ENCODE measurements at regions of chr4 and their contacts with region 1.

Region 1: GRCh38 chr4:80365928-80366327 is 30.4 kb downstream of the CFAP299 start:
- DNase-seq: peak; percentile 76
- H3K4me3 ChIP-seq: no peak overlapping the region
- H3K27ac ChIP-seq: peak overlapping the region in 1 of 4 donors; percentile 3
- H3K4me1 ChIP-seq: peaks cover 0 to 5% (median 3%) of the 10 kb centered on the region in 4 donors
- H3K27me3 ChIP-seq: no peaks in the 10 kb centered on the region
- CTCF ChIP-seq: peak; percentile 31 to 67 (median 64)
- EP300 ChIP-seq: no peak
- POLR2A ChIP-seq: no peak

Region 2: GRCh38 chr4:80454040-80454439 is 88.1 kb after region 1 on chr4:
- intact Hi-C with region 1: no loop called
- DNase-seq: no peak
- H3K4me3 ChIP-seq: no peak overlapping the region
- H3K27ac ChIP-seq: no peak overlapping the region
- H3K4me1 ChIP-seq: no peaks in the 10 kb centered on the region
- H3K27me3 ChIP-seq: no peaks in the 10 kb centered on the region
- CTCF ChIP-seq: no peak
- EP300 ChIP-seq: no peak
- POLR2A ChIP-seq: no peak

Region 3: GRCh38 chr4:80610845-80611677 is 245.1 kb after region 1 on chr4:
- intact Hi-C with region 1: loop called (anchors 10 kb)
- DNase-seq: no peak
- H3K4me3 ChIP-seq: no peak overlapping the region
- H3K27ac ChIP-seq: no peak overlapping the region
- H3K4me1 ChIP-seq: peaks cover 0 to 28% (median 8%) of the 10 kb centered on the region in 4 donors
- H3K27me3 ChIP-seq: no peaks in the 10 kb centered on the region
- CTCF ChIP-seq: no peak
- EP300 ChIP-seq: no peak
- POLR2A ChIP-seq: no peak

Region 4: GRCh38 chr4:80713409-80713808 is 347.5 kb after region 1 on chr4:
- intact Hi-C with region 1: loop called (anchors 10 kb)
- DNase-seq: peak; percentile 76
- H3K4me3 ChIP-seq: no peak overlapping the region
- H3K27ac ChIP-seq: peak overlapping the region in 3 of 4 donors; percentile 57 to 74 (median 70)
- H3K4me1 ChIP-seq: peaks cover 0 to 62% (median 48%) of the 10 kb centered on the region in 4 donors
- H3K27me3 ChIP-seq: no peaks in the 10 kb centered on the region
- CTCF ChIP-seq: no peak
- EP300 ChIP-seq: no peak
- POLR2A ChIP-seq: no peak

Region 5: DNA sequence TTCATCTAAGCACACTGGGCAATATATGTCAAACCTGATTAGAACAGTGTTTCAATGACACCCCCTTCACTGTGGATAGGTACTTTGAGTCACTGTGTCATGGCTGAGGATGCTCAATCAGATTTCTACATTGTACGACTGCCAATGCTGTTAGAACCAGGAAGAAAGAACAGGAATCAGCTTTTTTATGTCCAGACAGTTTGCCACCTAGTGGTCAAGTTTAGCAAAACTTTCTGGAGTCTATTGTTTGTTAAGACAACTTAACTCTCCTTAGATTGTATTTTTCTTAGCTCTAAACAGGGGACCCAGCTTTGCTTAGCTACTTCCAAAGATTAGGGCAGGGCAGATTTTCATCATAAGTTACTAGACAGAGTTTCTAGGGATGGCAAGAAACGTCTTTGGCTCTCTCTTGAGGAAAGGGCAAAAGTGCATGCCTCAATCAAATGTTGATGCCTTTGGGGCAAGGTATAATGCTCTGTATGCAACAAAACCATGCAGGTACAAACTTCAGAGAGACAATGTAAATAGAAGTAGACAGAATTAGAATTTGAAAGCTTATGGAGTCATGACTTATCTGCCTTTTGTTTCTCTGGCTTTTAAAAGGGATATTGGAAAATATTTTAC is 624.1 kb after region 1 on chr4:
- intact Hi-C with region 1: loop called (anchors 2 kb)
- DNase-seq: no peak
- H3K4me3 ChIP-seq: no peak overlapping the region
- H3K27ac ChIP-seq: no peak overlapping the region
- H3K4me1 ChIP-seq: peaks cover 0 to 11% (median 0%) of the 10 kb centered on the region in 4 donors
- H3K27me3 ChIP-seq: no peaks in the 10 kb centered on the region
- CTCF ChIP-seq: peak; percentile 35 to 67 (median 52)
- EP300 ChIP-seq: no peak
- POLR2A ChIP-seq: no peak

Region 6: DNA sequence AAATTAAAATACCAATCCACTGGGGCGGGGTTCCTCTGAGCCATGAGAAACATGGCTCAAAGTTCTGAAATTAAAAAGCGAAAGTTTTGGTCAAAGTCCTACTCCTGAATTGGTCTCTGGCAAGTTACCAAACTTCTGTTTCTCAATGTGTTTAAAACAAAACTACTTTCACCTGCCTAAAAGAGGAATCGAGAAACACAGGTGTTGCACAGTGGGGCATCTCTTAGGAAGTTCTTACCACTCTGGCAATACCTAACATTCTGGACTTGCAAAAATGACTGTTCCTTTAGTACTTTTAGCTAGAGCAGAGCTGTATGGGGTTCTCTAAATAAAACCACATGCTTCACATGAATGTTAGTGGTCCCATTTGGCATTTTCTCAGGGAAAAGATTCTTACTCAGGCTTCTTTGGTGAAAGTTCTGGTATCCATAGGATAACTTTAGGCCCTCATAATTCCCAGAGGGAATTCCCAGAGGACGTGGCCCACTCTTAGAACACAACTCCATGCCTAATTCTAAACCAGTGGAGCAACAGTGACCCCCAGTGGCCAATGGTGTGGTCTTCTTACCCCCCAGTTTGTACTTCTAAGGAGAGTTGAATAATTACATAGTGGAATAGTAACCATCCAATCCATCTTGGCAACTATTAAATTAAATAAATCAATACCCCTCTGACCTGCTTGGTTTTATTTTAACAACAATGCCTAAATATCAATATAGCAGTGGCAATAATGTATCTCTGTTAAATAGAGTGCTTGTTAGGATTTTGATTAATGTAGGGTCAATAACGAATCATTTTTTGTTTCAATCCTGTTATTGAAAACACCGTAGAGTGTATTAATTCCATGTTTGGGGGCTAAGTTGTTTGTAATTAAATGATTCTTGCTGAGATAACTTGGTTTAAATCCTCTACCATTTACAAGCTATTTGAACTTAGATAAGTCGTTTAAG is 686.5 kb after region 1 on chr4:
- intact Hi-C with region 1: loop called (anchors 1 kb)
- DNase-seq: peak; percentile 80
- H3K4me3 ChIP-seq: no peak overlapping the region
- H3K27ac ChIP-seq: peak overlapping the region in 3 of 4 donors; percentile 51 to 76 (median 57)
- H3K4me1 ChIP-seq: peaks cover 0 to 72% (median 46%) of the 10 kb centered on the region in 4 donors
- H3K27me3 ChIP-seq: no peaks in the 10 kb centered on the region
- CTCF ChIP-seq: peak; percentile 38 to 74 (median 63)
- EP300 ChIP-seq: no peak
- POLR2A ChIP-seq: no peak

Region 7: GRCh38 chr4:81351654-81352445 is 985.9 kb after region 1 on chr4:
- intact Hi-C with region 1: loop called (anchors 2 kb)
- DNase-seq: peak; percentile 77
- H3K4me3 ChIP-seq: no peak overlapping the region
- H3K27ac ChIP-seq: no peak overlapping the region
- H3K4me1 ChIP-seq: no peaks in the 10 kb centered on the region
- H3K27me3 ChIP-seq: no peaks in the 10 kb centered on the region
- CTCF ChIP-seq: peak; percentile 25 to 85 (median 68)
- EP300 ChIP-seq: no peak
- POLR2A ChIP-seq: no peak